HEK293 (cell line): ENCODE measurements at regions of chr1 and their contacts with region 1.

Region 1: GRCh38 chr1:186605762-186606350 is 74.4 kb downstream of the PTGS2 start:
- H3K4me3 ChIP-seq: no peak overlapping the region
- H3K27ac ChIP-seq: no peak overlapping the region
- H3K4me1 ChIP-seq: no peaks in the 10 kb centered on the region
- CTCF ChIP-seq: peak; percentile 79

Region 2: GRCh38 chr1:186454981-186455380 is 150.9 kb before region 1 on chr1:
- CTCF ChIA-PET with region 1: no interaction called
- POLR2A ChIA-PET with region 1: no interaction called
- H3K4me3 ChIP-seq: no peak overlapping the region
- H3K27ac ChIP-seq: no peak overlapping the region
- H3K4me1 ChIP-seq: no peaks in the 10 kb centered on the region
- CTCF ChIP-seq: no peak

Region 3: DNA sequence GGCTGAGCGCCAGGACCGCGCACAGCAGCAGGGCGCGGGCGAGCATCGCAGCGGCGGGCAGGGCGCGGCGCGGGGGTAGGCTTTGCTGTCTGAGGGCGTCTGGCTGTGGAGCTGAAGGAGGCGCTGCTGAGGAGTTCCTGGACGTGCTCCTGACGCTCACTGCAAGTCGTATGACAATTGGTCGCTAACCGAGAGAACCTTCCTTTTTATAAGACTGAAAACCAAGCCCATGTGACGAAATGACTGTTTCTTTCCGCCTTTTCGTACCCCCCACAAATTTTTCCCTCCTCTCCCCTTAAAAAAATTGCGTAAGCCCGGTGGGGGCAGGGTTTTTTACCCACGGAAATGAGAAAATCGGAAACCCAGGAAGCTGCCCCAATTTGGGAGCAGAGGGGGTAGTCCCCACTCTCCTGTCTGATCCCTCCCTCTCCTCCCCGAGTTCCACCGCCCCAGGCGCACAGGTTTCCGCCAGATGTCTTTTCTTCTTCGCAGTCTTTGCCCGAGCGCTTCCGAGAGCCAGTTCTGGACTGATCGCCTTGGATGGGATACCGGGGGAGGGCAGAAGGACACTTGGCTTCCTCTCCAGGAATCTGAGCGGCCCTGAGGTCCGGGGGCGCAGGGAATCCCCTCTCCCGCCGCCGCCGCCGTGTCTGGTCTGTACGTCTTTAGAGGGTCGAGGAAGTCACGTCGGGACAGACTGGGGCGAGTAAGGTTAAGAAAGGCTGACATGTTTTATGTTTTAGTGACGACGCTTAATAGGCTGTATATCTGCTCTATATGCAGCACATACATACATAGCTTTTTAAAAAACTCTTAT is 74.6 kb after region 1 on chr1 and contains the start of gene PTGS2:
- CTCF ChIA-PET with region 1: interaction called, 11 read pairs
- POLR2A ChIA-PET with region 1: no interaction called
- H3K4me3 ChIP-seq: peak within 1 kb of the TSS; percentile 62
- H3K27ac ChIP-seq: peak within 1 kb of the TSS; percentile 66
- H3K4me1 ChIP-seq: no peaks in the 10 kb centered on the region
- CTCF ChIP-seq: peak; percentile 57

Region 4: GRCh38 chr1:186806477-186806876 is 200.6 kb after region 1 on chr1:
- CTCF ChIA-PET with region 1: interaction called, 19 read pairs
- POLR2A ChIA-PET with region 1: no interaction called
- H3K4me3 ChIP-seq: no peak overlapping the region
- H3K27ac ChIP-seq: no peak overlapping the region
- H3K4me1 ChIP-seq: no peaks in the 10 kb centered on the region
- CTCF ChIP-seq: no peak; the same call in 1 of the 2 replicates

Region 5: GRCh38 chr1:186985889-186986491 is 380.1 kb after region 1 on chr1:
- CTCF ChIA-PET with region 1: interaction called, 38 read pairs
- POLR2A ChIA-PET with region 1: no interaction called
- H3K4me3 ChIP-seq: no peak overlapping the region
- H3K27ac ChIP-seq: no peak overlapping the region
- H3K4me1 ChIP-seq: no peaks in the 10 kb centered on the region
- CTCF ChIP-seq: peak; percentile 31; the same call in 1 of the 2 replicates